ENCODE measurements at regions of chr5 and their contacts with region 1.

Region 1: DNA sequence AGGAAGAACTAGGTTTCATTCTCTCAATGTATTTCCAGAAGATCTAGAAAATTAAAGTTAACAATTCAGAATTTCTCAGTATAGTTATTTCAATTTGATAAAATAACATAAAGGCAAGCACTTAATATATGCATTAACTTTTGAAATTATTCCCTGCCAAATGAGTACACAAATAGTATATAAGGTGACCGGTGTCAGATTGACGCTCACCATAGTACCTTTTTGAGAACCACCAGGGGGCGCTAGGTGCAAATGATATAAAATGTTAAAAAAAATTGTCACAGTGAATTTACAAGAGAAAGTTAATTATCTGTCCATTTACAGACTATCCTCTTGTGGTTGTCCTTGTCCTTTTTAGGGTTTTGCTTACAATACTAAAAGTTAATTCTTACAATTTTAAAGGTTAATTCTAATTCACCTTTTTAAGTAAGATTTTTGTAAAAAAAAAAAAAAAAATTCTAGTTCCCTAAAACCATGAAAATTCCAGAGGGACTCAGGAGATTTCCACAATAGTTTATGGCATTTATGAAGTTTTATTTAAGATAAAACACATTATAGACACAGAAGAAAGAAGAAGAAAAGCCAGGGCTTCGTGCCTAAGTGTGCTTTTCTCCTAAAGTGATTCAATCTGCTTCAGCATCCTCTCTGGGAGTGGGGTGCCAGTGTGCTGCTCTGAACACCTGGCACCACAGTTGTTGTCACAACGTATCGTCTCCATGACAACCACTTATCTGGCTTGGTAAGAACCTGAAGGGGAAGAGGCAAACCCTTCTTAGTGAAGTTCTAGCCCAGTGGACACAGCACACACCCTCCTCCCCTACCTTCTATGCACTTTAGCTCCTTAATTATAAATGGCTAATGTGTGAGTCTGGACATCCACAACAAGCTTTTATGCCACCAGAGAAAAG is 1.7 kb downstream of the ADAMTS16 start:
- DNase-seq: peak; percentile 80
- H3K4me3 ChIP-seq: no peak overlapping the region
- H3K27ac ChIP-seq: no peak overlapping the region
- H3K4me1 ChIP-seq: no peaks in the 10 kb centered on the region
- H3K27me3 ChIP-seq: peaks cover 29% of the 10 kb centered on the region
- CTCF ChIP-seq: peak; percentile 78

Region 2: DNA sequence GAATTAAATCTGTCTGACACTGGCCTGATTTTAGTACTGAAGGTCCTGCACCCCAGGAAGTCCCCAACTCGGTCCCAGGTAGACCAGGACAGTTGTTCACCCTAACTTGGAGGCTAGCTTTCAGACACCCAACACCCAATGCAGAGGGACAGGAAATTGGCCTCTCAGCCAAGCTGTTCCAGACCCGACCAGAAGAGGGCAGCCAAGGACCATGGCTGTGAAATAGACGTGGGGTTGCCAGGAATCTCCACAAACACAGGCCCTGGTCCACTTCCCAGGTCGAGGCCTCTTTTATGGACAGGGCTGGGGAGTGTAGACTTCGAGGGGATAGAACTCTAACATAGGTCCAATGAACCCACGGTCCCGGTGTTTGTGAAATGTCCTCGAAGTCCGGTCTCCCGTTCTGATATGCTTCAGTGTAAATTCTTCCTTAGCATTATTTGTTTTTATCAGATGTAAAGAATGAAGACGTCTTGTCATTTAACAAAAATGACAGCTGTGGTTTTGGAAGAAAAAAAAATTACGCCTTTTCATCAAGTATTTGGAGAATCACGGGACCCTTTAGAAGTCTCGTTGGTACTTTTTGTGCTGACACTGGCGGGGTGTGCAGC is 262.1 kb before region 1 on chr5:
- CTCF ChIA-PET with region 1: no interaction called
- POLR2A ChIA-PET with region 1: no interaction called
- intact Hi-C with region 1: loop called (anchors 2 kb)
- DNase-seq: peak; percentile 68
- H3K4me3 ChIP-seq: no peak overlapping the region
- H3K27ac ChIP-seq: no peak overlapping the region
- H3K4me1 ChIP-seq: no peaks in the 10 kb centered on the region
- H3K27me3 ChIP-seq: peaks cover 11% of the 10 kb centered on the region
- CTCF ChIP-seq: peak; percentile 89

Region 3: DNA sequence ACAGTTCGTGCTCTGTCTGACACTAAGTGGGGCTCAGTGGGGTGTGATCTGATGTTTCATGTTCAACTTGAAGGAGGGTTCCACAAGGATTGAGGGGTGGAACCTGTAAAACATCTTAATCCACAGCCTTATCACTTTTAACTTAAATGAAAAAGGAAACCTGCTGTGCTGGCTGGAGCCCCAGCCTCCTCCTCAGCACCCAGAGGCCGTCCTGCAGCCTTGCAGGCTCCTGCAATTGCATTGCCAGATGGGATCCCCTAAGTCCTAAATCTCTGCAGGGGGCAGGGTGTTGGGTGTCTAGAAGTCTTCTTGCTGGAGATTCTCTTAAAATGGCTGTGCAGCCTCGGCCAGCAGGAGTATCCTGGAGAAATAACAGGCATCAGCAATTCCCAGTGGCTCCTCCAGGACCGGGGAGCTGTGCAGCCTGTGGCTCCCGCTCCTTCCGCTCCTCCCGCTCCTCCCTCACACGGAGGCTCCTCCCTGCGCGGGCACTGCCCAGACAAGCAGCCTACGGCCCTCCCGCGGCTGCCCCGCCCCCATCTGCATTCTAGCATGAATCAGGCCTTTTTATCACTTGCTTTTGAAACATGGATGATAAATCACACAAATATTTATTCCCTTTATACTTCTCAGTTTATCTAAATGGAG is 129.2 kb after region 1 on chr5:
- CTCF ChIA-PET with region 1: no interaction called
- POLR2A ChIA-PET with region 1: no interaction called
- intact Hi-C with region 1: loop called (anchors 2 kb)
- DNase-seq: peak; percentile 96
- H3K4me3 ChIP-seq: peak overlapping the region; percentile 31
- H3K27ac ChIP-seq: peak overlapping the region; percentile 66
- H3K4me1 ChIP-seq: peaks cover 18% of the 10 kb centered on the region
- H3K27me3 ChIP-seq: no peaks in the 10 kb centered on the region
- CTCF ChIP-seq: no peak

Region 4: GRCh38 chr5:5340206-5340729 is 198.4 kb after region 1 on chr5:
- CTCF ChIA-PET with region 1: interaction called, 4 read pairs
- POLR2A ChIA-PET with region 1: no interaction called
- intact Hi-C with region 1: loop called (anchors 5 kb)
- DNase-seq: peak; percentile 97
- H3K4me3 ChIP-seq: no peak overlapping the region
- H3K27ac ChIP-seq: peak overlapping the region; percentile 63
- H3K4me1 ChIP-seq: peaks cover 47% of the 10 kb centered on the region
- H3K27me3 ChIP-seq: no peaks in the 10 kb centered on the region
- CTCF ChIP-seq: peak; percentile 62

Region 5: GRCh38 chr5:5381310-5381913 is 239.5 kb after region 1 on chr5:
- CTCF ChIA-PET with region 1: no interaction called
- POLR2A ChIA-PET with region 1: no interaction called
- intact Hi-C with region 1: no loop called
- DNase-seq: no peak
- H3K4me3 ChIP-seq: no peak overlapping the region
- H3K27ac ChIP-seq: no peak overlapping the region
- H3K4me1 ChIP-seq: no peaks in the 10 kb centered on the region
- H3K27me3 ChIP-seq: no peaks in the 10 kb centered on the region
- CTCF ChIP-seq: 0 out of 2 replicates have a peak, but pooled peaks have one; percentile 16

Region 6: GRCh38 chr5:5398046-5398445 is 256.2 kb after region 1 on chr5:
- CTCF ChIA-PET with region 1: interaction called, 4 read pairs
- POLR2A ChIA-PET with region 1: no interaction called
- intact Hi-C with region 1: loop called (anchors 1 kb)
- DNase-seq: no peak
- H3K4me3 ChIP-seq: no peak overlapping the region
- H3K27ac ChIP-seq: no peak overlapping the region
- H3K4me1 ChIP-seq: peaks cover 7% of the 10 kb centered on the region
- H3K27me3 ChIP-seq: no peaks in the 10 kb centered on the region
- CTCF ChIP-seq: no peak

Region 7: GRCh38 chr5:5409151-5409810 is 267.4 kb after region 1 on chr5:
- CTCF ChIA-PET with region 1: no interaction called
- POLR2A ChIA-PET with region 1: no interaction called
- intact Hi-C with region 1: no loop called
- DNase-seq: no peak
- H3K4me3 ChIP-seq: no peak overlapping the region
- H3K27ac ChIP-seq: no peak overlapping the region
- H3K4me1 ChIP-seq: peaks cover 1% of the 10 kb centered on the region
- H3K27me3 ChIP-seq: no peaks in the 10 kb centered on the region
- CTCF ChIP-seq: no peak

Region 8: GRCh38 chr5:5419294-5420210 is 277.7 kb after region 1 on chr5:
- CTCF ChIA-PET with region 1: interaction called, 6 read pairs
- POLR2A ChIA-PET with region 1: no interaction called
- intact Hi-C with region 1: loop called (anchors 1 kb)
- DNase-seq: peak; percentile 71
- H3K4me3 ChIP-seq: no peak overlapping the region
- H3K27ac ChIP-seq: no peak overlapping the region
- H3K4me1 ChIP-seq: peaks cover 7% of the 10 kb centered on the region
- H3K27me3 ChIP-seq: no peaks in the 10 kb centered on the region
- CTCF ChIP-seq: peak; percentile 85